Activated naive CD4-positive, alpha-beta T cell treated with anti-CD3 and anti-CD28 coated beads for 36 hours (primary cell): ENCODE measurements at regions of chr3 and their contacts with region 1.

Region 1: GRCh38 chr3:170055209-170055608 is 17.4 kb downstream of the GPR160 start:
- DNase-seq: peak; percentile 58
- H3K4me3 Mint-ChIP-seq: no peak overlapping the region
- H3K27ac Mint-ChIP-seq: no peak overlapping the region
- H3K4me1 Mint-ChIP-seq: peaks cover 50% of the 10 kb centered on the region
- H3K27me3 Mint-ChIP-seq: no peaks in the 10 kb centered on the region

Region 2: DNA sequence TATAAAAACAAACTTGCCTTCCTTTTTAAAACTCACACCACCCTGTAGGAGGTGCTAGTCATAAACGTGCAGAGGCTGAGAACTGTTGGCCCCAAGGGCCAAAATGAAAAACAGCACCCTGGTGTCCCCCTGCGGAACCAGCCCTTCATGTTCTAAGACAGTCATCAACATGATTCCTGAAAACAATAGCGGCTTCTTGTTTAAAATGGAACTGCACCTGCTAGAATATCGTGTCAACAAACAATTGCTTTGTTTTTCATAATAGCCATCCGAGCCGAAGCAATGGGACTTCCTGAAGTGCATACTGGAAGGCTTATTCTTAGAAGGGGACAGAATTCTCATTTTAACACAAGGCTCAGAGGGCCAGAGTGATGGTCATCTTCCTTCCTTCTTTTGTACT is 435.4 kb before region 1 on chr3:
- CTCF ChIA-PET with region 1: no interaction called
- intact Hi-C with region 1: no loop called
- DNase-seq: no peak
- H3K4me3 Mint-ChIP-seq: no peak overlapping the region
- H3K27ac Mint-ChIP-seq: no peak overlapping the region
- H3K4me1 Mint-ChIP-seq: no peaks in the 10 kb centered on the region
- H3K27me3 Mint-ChIP-seq: peaks cover under 1% of the 10 kb centered on the region

Region 3: DNA sequence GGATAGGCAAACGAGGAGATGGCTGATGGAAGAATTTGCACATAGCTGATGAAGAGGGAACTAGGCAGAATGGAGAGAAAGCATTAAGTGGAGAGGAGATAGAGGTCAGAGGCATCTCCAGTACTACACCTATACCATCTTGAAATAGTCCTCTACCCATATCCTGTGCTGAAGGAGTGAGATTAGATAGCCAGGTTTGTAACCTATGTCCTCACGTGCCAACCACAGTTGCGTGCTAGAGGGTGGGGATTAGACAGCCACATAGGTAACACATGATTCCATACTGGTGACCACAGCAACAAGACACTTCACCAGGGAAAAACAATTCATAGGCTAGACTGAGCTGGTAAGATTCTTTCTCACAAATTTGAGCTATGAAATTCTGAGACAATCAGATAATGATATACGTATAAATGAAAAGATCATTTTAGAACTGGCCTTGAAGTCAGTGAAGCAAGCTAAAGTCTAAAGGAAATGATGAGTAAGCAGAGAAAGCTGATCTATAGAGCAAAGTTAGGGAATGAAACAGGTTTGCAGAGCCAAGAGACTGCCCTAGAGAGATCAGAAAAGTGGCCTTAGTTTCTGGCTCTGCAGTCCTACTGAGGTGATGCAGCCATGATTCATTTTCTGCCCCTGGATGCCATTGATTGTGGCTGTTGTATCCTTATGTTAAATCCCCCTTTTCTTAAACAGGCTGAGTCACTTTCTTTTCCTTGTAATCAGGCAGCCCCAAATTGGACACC is 264.4 kb before region 1 on chr3:
- CTCF ChIA-PET with region 1: no interaction called
- intact Hi-C with region 1: no loop called
- DNase-seq: no peak
- H3K4me3 Mint-ChIP-seq: no peak overlapping the region
- H3K27ac Mint-ChIP-seq: no peak overlapping the region
- H3K4me1 Mint-ChIP-seq: no peaks in the 10 kb centered on the region
- H3K27me3 Mint-ChIP-seq: no peaks in the 10 kb centered on the region

Region 4: DNA sequence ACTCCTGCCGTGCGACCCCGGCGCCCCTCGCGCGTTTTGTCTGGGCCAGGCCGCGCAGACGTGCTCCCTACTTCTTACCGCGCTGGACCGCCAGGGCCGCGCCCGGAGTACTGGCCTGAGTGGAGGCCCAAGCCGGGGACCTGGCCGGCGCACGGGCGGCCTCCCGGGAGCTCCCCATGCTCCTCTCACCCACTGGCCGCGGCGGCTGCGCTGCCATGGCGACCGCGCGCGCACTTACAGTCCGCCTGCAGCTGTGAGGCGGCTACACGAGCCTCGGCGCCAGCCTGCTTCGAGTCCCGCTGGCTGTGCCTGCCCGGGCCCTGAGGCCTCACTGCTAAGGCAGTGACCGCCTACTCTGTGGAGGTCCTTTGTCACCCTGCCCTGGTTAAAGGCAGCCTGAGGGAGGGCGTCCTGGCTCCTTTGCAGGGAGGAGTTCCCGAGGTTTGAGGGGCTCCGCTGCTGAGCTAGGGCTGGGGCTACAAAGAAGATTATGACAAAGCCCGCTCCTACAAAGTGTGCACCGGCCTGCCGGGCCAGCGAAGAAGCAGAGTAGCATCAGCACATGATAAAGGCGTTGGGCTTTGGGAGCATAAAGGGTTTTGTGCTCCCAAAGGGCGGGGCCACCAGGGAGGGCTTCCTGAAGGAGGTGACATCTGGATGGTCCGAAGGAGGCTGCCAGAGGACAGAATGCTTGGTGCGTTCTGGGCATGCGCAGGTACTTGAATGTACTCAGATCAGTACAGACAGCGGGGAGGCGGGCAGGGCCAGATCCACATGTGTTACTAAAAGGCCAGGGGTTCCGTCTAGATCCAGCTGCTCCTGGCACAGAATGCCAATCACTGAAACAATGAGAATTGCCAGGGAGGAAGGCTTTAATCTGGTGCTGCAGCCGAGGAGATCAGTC is 242.6 kb before region 1 on chr3 and contains the starts of genes LRRC34 and LRRIQ4:
- CTCF ChIA-PET with region 1: no interaction called
- intact Hi-C with region 1: loop called (anchors 1 kb)
- DNase-seq: peak; percentile 91
- H3K4me3 Mint-ChIP-seq: peak within 1 kb of the TSS; percentile 82
- H3K27ac Mint-ChIP-seq: peak within 1 kb of the TSS; percentile 79
- H3K4me1 Mint-ChIP-seq: peaks cover 19% of the 10 kb centered on the region
- H3K27me3 Mint-ChIP-seq: no peaks in the 10 kb centered on the region
- total RNA-seq, gene LRRC34: 3.8 to 3.9 TPM
- total RNA-seq, gene LRRIQ4: 0.12 TPM in 1 of 2 experiments, not detected in the other

Region 5: GRCh38 chr3:169945313-169945712 is 109.9 kb before region 1 on chr3:
- CTCF ChIA-PET with region 1: no interaction called
- intact Hi-C with region 1: loop called (anchors 1 kb)
- DNase-seq: peak; percentile 84
- H3K4me3 Mint-ChIP-seq: peak overlapping the region; percentile 30
- H3K27ac Mint-ChIP-seq: peak overlapping the region; percentile 78
- H3K4me1 Mint-ChIP-seq: peaks cover 37% of the 10 kb centered on the region
- H3K27me3 Mint-ChIP-seq: no peaks in the 10 kb centered on the region

Region 6: GRCh38 chr3:170037463-170038433 is 17.5 kb before region 1 on chr3 and contains the start of gene GPR160:
- CTCF ChIA-PET with region 1: interaction called, 18 read pairs
- intact Hi-C with region 1: loop called (anchors 1 kb)
- DNase-seq: peak; percentile 89
- H3K4me3 Mint-ChIP-seq: peak within 1 kb of the TSS; percentile 84
- H3K27ac Mint-ChIP-seq: no peak within 1 kb of the TSS
- H3K4me1 Mint-ChIP-seq: peaks cover 24% of the 10 kb centered on the region
- H3K27me3 Mint-ChIP-seq: no peaks in the 10 kb centered on the region
- total RNA-seq, gene GPR160: 10.3 TPM

Region 7: GRCh38 chr3:170098753-170099152 is 43.5 kb after region 1 on chr3:
- CTCF ChIA-PET with region 1: interaction called, 3 read pairs
- intact Hi-C with region 1: loop called (anchors 1 kb)
- DNase-seq: no peak
- H3K4me3 Mint-ChIP-seq: peak overlapping the region; percentile 2
- H3K27ac Mint-ChIP-seq: peak overlapping the region; percentile 95
- H3K4me1 Mint-ChIP-seq: peaks cover 59% of the 10 kb centered on the region
- H3K27me3 Mint-ChIP-seq: no peaks in the 10 kb centered on the region

Region 8: GRCh38 chr3:170221924-170222646 is 166.9 kb after region 1 on chr3 and contains the start of gene PRKCI:
- CTCF ChIA-PET with region 1: no interaction called
- intact Hi-C with region 1: loop called (anchors 1 kb)
- DNase-seq: peak; percentile 95
- H3K4me3 Mint-ChIP-seq: peak within 1 kb of the TSS; percentile 78
- H3K27ac Mint-ChIP-seq: peak within 1 kb of the TSS; percentile 92
- H3K4me1 Mint-ChIP-seq: peaks cover 24% of the 10 kb centered on the region
- H3K27me3 Mint-ChIP-seq: no peaks in the 10 kb centered on the region
- total RNA-seq, gene PRKCI: 20.8 to 23.0 TPM